CD14-positive monocyte (primary cell): ENCODE measurements at regions of chr16 and their contacts with region 1.

Region 1: DNA sequence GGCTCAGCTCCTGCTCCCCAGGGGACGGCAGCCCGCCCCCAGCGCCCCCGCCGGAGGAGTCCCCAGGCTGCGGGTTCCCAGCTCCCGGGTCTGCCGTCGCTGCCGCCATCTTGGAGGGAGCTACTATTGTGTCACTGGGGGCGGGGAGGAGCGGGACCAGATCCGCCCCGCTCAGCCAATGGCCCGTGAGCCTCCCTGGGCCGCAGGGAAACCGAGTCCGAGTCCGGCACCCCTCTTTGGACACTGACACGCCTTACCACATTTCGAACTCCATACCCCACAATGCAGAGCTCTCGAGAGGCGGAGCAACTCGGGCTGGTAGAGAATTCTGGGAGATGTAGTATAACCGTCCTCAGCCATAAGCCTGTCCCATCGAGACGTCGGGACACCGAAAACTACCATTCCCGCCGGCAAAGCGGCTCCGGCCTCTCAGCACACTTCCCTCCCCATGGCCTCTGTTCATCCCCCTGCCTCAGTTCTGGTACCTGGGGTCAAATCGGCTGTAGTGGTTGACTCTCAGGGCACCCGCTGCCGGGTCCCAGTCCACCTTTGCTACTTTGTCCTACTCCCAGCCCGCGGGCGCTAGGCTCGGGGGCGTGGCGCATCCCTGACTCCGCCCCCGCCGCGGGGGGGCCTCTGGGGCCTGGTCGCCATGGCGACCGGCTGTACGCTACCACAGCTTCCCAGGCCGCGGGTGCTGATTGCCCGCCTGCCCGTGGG is at the starts of genes RANBP10 and TSNAXIP1:
- DNase-seq: peak; percentile 98 to 99 (median 99)
- H3K4me3 ChIP-seq: peak within 1 kb of the TSS; percentile 76 to 97 (median 84)
- H3K4me3 Mint-ChIP-seq: peak within 1 kb of the TSS; percentile 84 to 94
- H3K27ac ChIP-seq: peak within 1 kb of the TSS; percentile 30 to 92
- H3K27ac Mint-ChIP-seq: peak within 1 kb of the TSS; percentile 73 to 96 (median 94)
- H3K4me1 ChIP-seq: peaks cover 22 to 34% of the 10 kb centered on the region in 2 donors
- H3K4me1 Mint-ChIP-seq: peaks cover 28% of the 10 kb centered on the region
- H3K27me3 ChIP-seq: no peaks in the 10 kb centered on the region
- H3K27me3 Mint-ChIP-seq: peaks cover under 1 to 2% (median 2%) of the 10 kb centered on the region in 3 donors
- CTCF ChIP-seq: no peak
- polyA plus RNA-seq, gene RANBP10: 6.4 to 16.7 (median 6.6) TPM
- polyA plus RNA-seq, gene TSNAXIP1: 0.23 TPM in 1 of 3 donors, not detected in the others

Region 2: DNA sequence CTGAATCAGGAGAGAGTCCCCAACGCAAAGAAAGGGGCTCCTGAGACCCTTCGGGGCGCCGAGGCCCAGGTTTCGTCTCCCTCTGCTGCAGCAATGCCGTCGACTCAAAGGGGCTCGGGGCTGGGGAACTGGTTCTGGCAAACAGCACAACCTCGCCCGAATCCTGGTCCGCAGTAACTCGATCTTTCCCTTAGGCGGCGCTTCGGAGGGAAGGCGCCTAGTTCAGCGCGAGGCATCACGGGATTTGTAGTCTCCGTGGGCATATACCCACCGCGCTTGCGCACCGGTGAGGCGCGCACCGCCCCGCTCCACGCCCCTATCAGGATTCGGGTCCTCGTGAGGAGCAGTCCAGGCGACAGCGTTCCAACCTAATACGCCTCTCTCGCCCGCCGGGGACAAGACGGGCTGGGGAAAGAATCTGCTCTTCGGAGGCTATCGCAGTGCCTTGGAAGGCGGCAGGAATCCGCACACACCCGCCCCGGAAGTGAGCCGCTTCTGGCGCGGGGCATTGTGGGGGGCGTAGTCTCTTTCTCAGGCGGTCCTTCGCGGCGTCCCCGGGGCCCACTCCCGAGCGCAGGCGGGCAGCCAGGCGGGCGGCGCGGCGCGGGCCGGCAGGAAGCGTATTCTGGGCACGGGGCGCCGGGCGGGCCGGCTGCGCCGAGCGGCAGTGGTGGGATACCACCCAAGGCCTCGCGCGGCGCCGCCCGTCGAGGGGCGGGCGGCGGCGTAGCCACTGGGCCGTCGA is 35.3 kb after region 1 on chr16 and contains the start of gene THAP11:
- intact Hi-C with region 1: loop called (anchors 1 kb)
- DNase-seq: peak; percentile 91 to 94 (median 91)
- H3K4me3 ChIP-seq: peak within 1 kb of the TSS; percentile 71 to 87 (median 85)
- H3K4me3 Mint-ChIP-seq: peak within 1 kb of the TSS; percentile 94 to 96
- H3K27ac ChIP-seq: peak within 1 kb of the TSS; percentile 85 to 91
- H3K27ac Mint-ChIP-seq: peak within 1 kb of the TSS; percentile 89 to 99 (median 96)
- H3K4me1 ChIP-seq: peaks cover 40 to 47% of the 10 kb centered on the region in 2 donors
- H3K4me1 Mint-ChIP-seq: peaks cover 39% of the 10 kb centered on the region
- H3K27me3 ChIP-seq: no peaks in the 10 kb centered on the region
- H3K27me3 Mint-ChIP-seq: peaks cover 1 to 2% (median 1%) of the 10 kb centered on the region in 3 donors
- CTCF ChIP-seq: peak; percentile 83
- polyA plus RNA-seq, gene THAP11: 17.6 to 84.2 (median 52.5) TPM

Region 3: DNA sequence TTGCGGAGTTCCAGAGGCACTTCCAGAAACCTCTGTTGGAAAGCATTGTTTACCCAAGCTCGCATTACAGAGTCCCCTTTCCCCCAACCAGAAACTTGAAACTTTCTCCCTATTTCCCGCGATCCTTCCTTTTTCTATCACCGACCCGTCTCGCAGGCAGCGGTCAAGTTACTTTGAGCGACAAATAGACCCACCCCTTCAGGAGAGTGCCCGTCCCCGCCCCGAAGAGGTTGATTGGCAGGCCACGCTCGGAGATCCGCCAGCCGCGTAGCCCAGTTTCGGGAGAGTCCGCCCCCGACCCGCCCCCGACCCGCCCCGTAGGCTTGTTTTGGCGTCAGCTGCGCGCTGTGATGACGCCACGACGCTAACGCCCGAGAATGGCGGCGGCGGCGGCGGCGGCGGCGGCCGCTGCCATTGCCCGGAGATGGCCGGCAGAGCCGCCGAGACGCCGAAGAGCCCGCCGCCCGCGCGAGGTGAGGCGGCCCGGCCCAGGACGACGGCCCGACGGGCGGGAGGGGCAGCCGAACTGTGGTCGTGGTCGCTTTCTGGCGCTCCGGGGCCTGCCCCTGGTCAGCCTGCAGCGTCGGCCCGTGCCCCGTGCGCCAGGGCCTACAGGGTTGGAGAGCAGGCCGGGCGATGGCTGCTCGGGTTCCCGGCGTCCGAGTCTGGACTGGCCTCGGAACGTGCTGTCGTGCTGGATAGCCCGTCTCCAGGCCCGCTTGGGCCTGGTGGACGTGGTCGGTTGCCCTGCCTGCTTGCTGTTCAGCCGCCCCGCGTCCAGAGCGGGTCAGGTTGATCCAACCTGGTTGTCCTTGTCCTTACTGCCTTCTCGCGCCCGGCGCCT is 86.5 kb after region 1 on chr16 and contains the start of gene PSKH1:
- intact Hi-C with region 1: loop called in 1 of 2 experiments (anchors 5 kb)
- DNase-seq: peak; percentile 92 to 94 (median 93)
- H3K4me3 ChIP-seq: peak within 1 kb of the TSS; percentile 58 to 91 (median 90)
- H3K4me3 Mint-ChIP-seq: peak within 1 kb of the TSS; percentile 89 to 95
- H3K27ac ChIP-seq: peak within 1 kb of the TSS; percentile 89 to 97
- H3K27ac Mint-ChIP-seq: peak within 1 kb of the TSS; percentile 93 to 98 (median 95)
- H3K4me1 ChIP-seq: peaks cover 18 to 21% of the 10 kb centered on the region in 2 donors
- H3K4me1 Mint-ChIP-seq: peaks cover 24% of the 10 kb centered on the region
- H3K27me3 ChIP-seq: no peaks in the 10 kb centered on the region
- H3K27me3 Mint-ChIP-seq: no peaks in the 10 kb centered on the region
- CTCF ChIP-seq: no peak
- polyA plus RNA-seq, gene PSKH1: 11.0 to 19.7 (median 16.8) TPM